ENCODE measurements at regions of chr19 and their contacts with region 1.

Region 1: GRCh38 chr19:52942386-52943133 is 19.3 kb upstream of the ZNF888 start:
- DNase-seq: peak; percentile 68 to 79
- ATAC-seq: peak; percentile 82 to 86
- H3K4me3 ChIP-seq: peak overlapping the region; percentile 65 to 68 (median 66)
- H3K27ac ChIP-seq: peak overlapping the region; percentile 61 to 79 (median 68)
- H3K4me1 ChIP-seq: no peaks in the 10 kb centered on the region
- H3K27me3 ChIP-seq: no peaks in the 10 kb centered on the region
- CTCF ChIP-seq: no peak
- POLR2A ChIP-seq: peak; percentile 23 to 40

Region 2: GRCh38 chr19:52922841-52923777 is 19.5 kb before region 1 on chr19 and contains the start of gene ZNF888:
- in situ Hi-C with region 1: no loop called
- intact Hi-C with region 1: loop called (anchors 1 kb)
- DNase-seq: peak; percentile 48 to 64
- ATAC-seq: peak; percentile 68 to 86
- H3K4me3 ChIP-seq: peak within 1 kb of the TSS; percentile 65 to 83 (median 66)
- H3K27ac ChIP-seq: peak within 1 kb of the TSS; percentile 64 to 79 (median 70)
- H3K4me1 ChIP-seq: no peaks in the 10 kb centered on the region
- H3K27me3 ChIP-seq: peaks cover 0 to 7% (median 0%) of the 10 kb centered on the region in 3 donors
- CTCF ChIP-seq: no peak
- POLR2A ChIP-seq: peak; percentile 13 to 27
- total RNA-seq, gene ZNF888: 0.15 to 0.29 (median 0.20) TPM

Region 3: DNA sequence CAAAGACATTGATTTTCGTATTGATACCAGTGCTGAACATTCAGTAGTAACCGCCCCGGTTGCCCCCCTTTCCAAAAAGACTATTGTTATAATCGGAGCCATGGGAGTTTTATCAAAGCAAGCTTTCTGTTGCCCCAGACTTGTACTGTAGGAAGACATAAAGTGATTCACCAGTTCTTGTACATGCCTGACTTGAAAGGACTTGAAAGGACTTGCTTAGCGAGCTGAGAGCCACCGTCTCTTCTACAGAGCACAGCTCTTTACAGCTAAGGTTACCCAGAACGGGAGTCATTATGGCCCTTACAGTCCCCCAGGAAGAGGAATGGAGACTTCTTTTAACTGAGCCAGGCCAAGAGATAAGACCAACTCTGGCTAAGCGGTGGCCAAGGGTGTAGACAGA is 15.0 kb after region 1 on chr19:
- in situ Hi-C with region 1: no loop called
- intact Hi-C with region 1: no loop called
- DNase-seq: no peak
- ATAC-seq: no peak
- H3K4me3 ChIP-seq: no peak overlapping the region
- H3K27ac ChIP-seq: no peak overlapping the region
- H3K4me1 ChIP-seq: no peaks in the 10 kb centered on the region
- H3K27me3 ChIP-seq: no peaks in the 10 kb centered on the region
- CTCF ChIP-seq: no peak
- POLR2A ChIP-seq: no peak